Activated naive CD4-positive, alpha-beta T cell treated with anti-CD3 and anti-CD28 coated beads for 36 hours (primary cell): ENCODE measurements at regions of chr5 and their contacts with region 1.

Region 1: DNA sequence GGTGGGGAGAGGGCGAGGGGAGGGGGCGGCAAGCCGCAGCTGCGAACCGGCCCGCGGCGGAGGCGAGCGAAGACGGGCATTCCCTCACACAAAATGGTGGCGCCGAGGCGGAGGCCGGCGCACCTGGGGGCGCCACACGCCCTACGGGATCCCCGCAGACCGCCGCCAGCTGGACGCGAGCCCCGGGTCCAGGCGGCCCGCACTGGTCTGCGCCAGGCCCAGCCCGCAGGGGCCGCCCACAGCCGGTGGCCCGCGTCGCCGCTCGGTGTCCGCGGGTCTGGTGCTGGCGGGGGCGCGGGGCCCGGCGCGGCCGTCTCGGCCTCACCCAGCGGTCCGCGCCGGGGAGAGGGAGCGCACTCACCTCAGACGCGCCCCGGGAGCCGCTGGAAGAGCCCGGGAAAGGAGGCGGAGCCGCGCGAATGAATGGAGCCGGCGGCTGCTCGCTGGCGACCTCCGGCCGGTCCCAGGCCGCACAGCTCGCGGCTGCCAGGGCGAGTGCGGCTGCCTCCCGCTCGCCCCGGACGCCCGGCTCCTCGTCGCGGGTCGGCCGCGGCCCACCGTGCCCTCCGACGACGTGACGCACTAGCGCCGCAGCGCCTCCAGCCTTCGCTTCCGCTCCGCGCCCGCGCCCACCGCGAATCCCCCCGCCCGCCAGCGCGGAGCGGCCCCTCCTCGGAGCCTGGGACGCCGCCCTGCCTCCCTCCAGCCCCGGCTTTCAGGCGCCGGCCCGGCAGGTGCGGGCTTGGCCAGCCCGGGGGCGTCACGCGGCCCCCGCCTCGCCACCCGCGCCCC is at the start of gene FAM169A:
- DNase-seq: peak; percentile 43
- H3K4me3 Mint-ChIP-seq: peak within 1 kb of the TSS; percentile 85
- H3K27ac Mint-ChIP-seq: peak within 1 kb of the TSS; percentile 83
- H3K4me1 Mint-ChIP-seq: peaks cover 28% of the 10 kb centered on the region
- H3K27me3 Mint-ChIP-seq: no peaks in the 10 kb centered on the region
- total RNA-seq, gene FAM169A: 9.3 to 10.7 TPM

Region 2: GRCh38 chr5:74684900-74685851 is 180.8 kb before region 1 on chr5 and contains the start of gene HEXB:
- CTCF ChIA-PET with region 1: no interaction called
- intact Hi-C with region 1: loop called (anchors 1 kb)
- DNase-seq: peak; percentile 92
- H3K4me3 Mint-ChIP-seq: peak within 1 kb of the TSS; percentile 71
- H3K27ac Mint-ChIP-seq: peak within 1 kb of the TSS; percentile 6
- H3K4me1 Mint-ChIP-seq: peaks cover 23% of the 10 kb centered on the region
- H3K27me3 Mint-ChIP-seq: no peaks in the 10 kb centered on the region
- total RNA-seq, gene HEXB: 65.6 to 70.0 TPM

Region 3: DNA sequence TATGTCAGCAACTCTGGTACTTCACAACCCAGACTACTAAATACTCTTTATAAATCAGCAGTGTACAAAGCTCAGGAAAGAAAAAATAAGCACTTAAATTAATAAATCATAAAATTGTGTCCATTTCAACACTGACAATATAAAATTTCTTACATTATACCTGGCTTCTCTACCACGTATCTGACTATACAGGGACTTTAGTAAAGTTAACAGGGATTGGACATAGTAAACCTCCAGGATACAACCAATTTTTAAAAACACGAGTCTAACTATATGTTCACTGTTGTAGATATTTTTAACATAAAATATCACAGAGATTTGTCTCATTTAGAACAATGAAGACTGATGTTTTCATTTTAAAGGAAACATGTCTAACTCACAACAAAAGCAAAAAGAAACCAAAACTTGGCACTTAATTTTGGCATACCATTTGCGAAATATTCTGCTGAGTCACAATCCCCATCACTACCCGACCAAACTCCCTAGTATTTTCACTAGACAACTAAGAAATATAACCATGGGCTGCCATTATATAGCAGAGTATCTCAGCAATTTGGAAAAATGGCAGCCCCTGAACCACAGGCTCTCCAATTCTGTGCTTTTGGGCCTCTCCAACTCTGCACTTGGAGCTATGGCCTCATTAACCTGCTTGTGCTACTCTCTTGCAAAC is 14.2 kb before region 1 on chr5:
- CTCF ChIA-PET with region 1: interaction called, 3 read pairs
- intact Hi-C with region 1: loop called (anchors 2 kb)
- DNase-seq: peak; percentile 28
- H3K4me3 Mint-ChIP-seq: peak overlapping the region; percentile 55
- H3K27ac Mint-ChIP-seq: peak overlapping the region; percentile 61
- H3K4me1 Mint-ChIP-seq: peaks cover 31% of the 10 kb centered on the region
- H3K27me3 Mint-ChIP-seq: no peaks in the 10 kb centered on the region

Region 4: DNA sequence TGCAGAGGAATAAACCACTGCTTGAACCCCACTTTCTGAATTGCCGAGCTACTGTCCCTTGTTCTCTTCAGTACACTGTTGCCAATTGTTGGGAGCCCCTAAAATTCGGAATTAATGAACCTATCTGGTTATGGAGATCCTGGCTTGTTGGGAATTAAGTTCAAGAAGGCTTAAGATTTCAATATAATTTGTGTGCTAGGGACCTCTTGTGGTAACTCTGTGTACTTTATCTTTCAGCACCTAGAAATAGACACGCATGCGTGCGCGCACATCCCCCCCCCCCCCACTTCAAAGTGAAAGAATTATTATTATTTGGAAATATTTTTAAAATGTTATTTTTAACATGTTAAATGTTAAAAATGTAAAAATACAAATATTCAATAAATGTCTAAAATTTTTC is 53.5 kb after region 1 on chr5:
- CTCF ChIA-PET with region 1: no interaction called
- intact Hi-C with region 1: no loop called
- DNase-seq: no peak
- H3K4me3 Mint-ChIP-seq: no peak overlapping the region
- H3K27ac Mint-ChIP-seq: no peak overlapping the region
- H3K4me1 Mint-ChIP-seq: no peaks in the 10 kb centered on the region
- H3K27me3 Mint-ChIP-seq: peaks cover 2% of the 10 kb centered on the region

Region 5: DNA sequence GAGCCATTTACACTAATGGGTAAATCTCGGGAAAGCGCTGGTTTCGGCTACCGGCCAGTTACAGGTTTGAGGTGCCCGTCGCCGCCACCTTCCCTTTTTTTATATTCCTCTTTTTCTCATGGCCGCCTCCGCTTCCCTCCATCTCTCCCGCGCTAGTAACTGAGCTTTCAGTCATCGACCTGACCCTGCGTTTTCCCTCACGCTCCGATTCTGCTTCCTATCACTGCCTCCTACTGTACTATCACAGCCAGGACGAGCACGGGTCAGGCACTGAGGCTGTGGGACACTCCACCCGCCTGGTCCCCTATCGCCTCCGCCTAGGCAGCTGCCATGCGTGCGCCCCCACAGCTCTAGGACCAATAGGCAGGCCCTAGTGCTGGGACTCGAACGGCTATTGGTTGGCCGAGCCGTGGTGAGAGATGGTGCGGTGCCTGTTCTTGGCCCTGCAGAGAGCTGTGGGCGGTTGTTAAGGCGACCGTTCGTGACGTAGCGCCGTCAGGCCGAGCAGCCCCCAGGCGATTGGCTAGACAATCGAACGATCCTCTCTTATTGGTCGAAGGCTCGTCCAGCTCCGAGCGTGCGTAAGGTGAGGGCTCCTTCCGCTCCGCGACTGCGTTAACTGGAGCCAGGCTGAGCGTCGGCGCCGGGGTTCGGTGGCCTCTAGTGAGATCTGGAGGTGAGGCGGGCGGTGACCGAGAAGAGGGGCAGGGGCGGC is 470.8 kb after region 1 on chr5 and contains the start of gene HMGCR:
- CTCF ChIA-PET with region 1: no interaction called
- intact Hi-C with region 1: loop called (anchors 2 kb)
- DNase-seq: peak; percentile 99
- H3K4me3 Mint-ChIP-seq: no peak within 1 kb of the TSS
- H3K27ac Mint-ChIP-seq: no peak within 1 kb of the TSS
- H3K4me1 Mint-ChIP-seq: peaks cover 35% of the 10 kb centered on the region
- H3K27me3 Mint-ChIP-seq: no peaks in the 10 kb centered on the region
- total RNA-seq, gene HMGCR: 61.7 to 67.5 TPM